ENCODE measurements at regions of chr12 and their contacts with region 1.

Region 1: GRCh38 chr12:42332301-42333285 is 6.6 kb downstream of the PPHLN1 start:
- DNase-seq: peak; percentile 27
- H3K4me3 ChIP-seq: no peak overlapping the region
- CTCF ChIP-seq: peak; percentile 49

Region 2: GRCh38 chr12:41944222-41944621 is 388.4 kb before region 1 on chr12:
- in situ Hi-C with region 1: loop called (anchors 10 kb)
- DNase-seq: no peak
- H3K4me3 ChIP-seq: no peak overlapping the region
- CTCF ChIP-seq: no peak

Measured in astrocyte of the cerebellum (primary cell).